Dendritic cell treated with granulocyte-macrophage colony-stimulating factor and Interleukin-4, amounts not matched to agents 40 ng/mL and 50 ng/mL, for 4 days (primary cell): ENCODE measurements at regions of chr13 and their contacts with region 1.

Region 1: GRCh38 chr13:95378603-95379002 is 77.4 kb upstream of the ABCC4 start:
- H3K4me3 Mint-ChIP-seq: no peak overlapping the region
- H3K27ac Mint-ChIP-seq: no peak overlapping the region
- H3K4me1 Mint-ChIP-seq: peaks cover 12% of the 10 kb centered on the region
- H3K27me3 Mint-ChIP-seq: peaks cover 5% of the 10 kb centered on the region

Region 2: DNA sequence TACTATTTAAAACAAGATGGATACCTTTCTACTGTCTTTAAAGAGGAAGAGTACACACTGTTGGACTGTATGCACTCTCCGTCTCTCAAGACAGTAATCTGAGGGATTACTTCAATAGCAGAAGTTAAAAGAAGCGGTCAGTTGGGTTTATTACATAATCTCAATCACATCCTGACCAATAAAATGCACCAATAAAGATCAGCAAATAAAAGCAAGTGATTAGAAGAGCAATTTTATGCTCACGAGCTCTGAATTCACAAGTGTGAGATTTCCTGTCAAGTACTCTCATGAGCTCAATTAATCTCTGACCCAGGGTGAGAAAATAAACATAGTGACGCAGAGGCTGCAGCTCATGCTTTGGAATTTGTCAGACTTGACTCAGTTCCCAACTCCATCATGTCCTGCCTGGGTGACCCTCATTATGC is 89.6 kb before region 1 on chr13:
- intact Hi-C with region 1: loop called (anchors 5 kb)
- H3K4me3 Mint-ChIP-seq: no peak overlapping the region
- H3K27ac Mint-ChIP-seq: no peak overlapping the region
- H3K4me1 Mint-ChIP-seq: peaks cover 50% of the 10 kb centered on the region
- H3K27me3 Mint-ChIP-seq: no peaks in the 10 kb centered on the region

Region 3: GRCh38 chr13:95301183-95301967 is 77.2 kb before region 1 on chr13 and contains the start of gene ABCC4:
- intact Hi-C with region 1: loop called (anchors 5 kb)
- H3K4me3 Mint-ChIP-seq: peak within 1 kb of the TSS; percentile 80
- H3K27ac Mint-ChIP-seq: peak within 1 kb of the TSS; percentile 75
- H3K4me1 Mint-ChIP-seq: peaks cover 36% of the 10 kb centered on the region
- H3K27me3 Mint-ChIP-seq: peaks cover 12% of the 10 kb centered on the region

Region 4: GRCh38 chr13:95438297-95438696 is 59.7 kb after region 1 on chr13:
- intact Hi-C with region 1: no loop called
- H3K4me3 Mint-ChIP-seq: no peak overlapping the region
- H3K27ac Mint-ChIP-seq: no peak overlapping the region
- H3K4me1 Mint-ChIP-seq: no peaks in the 10 kb centered on the region
- H3K27me3 Mint-ChIP-seq: no peaks in the 10 kb centered on the region